Activated B cell treated with CpG ODN at 0.5 μM for 24 hours (primary cell): ENCODE measurements at regions of chr1 and their contacts with region 1.

Region 1: GRCh38 chr1:75233302-75233929 is 99.2 kb downstream of the LHX8 start:
- DNase-seq: no peak
- ATAC-seq: peak; percentile 61
- H3K4me3 Mint-ChIP-seq: no peak overlapping the region
- H3K27ac Mint-ChIP-seq: no peak overlapping the region
- H3K4me1 Mint-ChIP-seq: no peaks in the 10 kb centered on the region
- H3K27me3 Mint-ChIP-seq: no peaks in the 10 kb centered on the region
- CTCF ChIP-seq: peak; percentile 50

Region 2: GRCh38 chr1:75188892-75189291 is 44.5 kb before region 1 on chr1:
- CTCF ChIA-PET with region 1: no interaction called
- POLR2A ChIA-PET with region 1: no interaction called
- intact Hi-C with region 1: no loop called
- DNase-seq: no peak
- ATAC-seq: no peak
- H3K4me3 Mint-ChIP-seq: no peak overlapping the region
- H3K27ac Mint-ChIP-seq: no peak overlapping the region
- H3K4me1 Mint-ChIP-seq: no peaks in the 10 kb centered on the region
- H3K27me3 Mint-ChIP-seq: peaks cover 6% of the 10 kb centered on the region
- CTCF ChIP-seq: no peak

Region 3: GRCh38 chr1:75245239-75245638 is 11.8 kb after region 1 on chr1:
- CTCF ChIA-PET with region 1: interaction called, 14 read pairs
- POLR2A ChIA-PET with region 1: no interaction called
- intact Hi-C with region 1: no loop called
- DNase-seq: no peak
- ATAC-seq: no peak
- H3K4me3 Mint-ChIP-seq: no peak overlapping the region
- H3K27ac Mint-ChIP-seq: no peak overlapping the region
- H3K4me1 Mint-ChIP-seq: peaks cover 5% of the 10 kb centered on the region
- H3K27me3 Mint-ChIP-seq: no peaks in the 10 kb centered on the region
- CTCF ChIP-seq: no peak

Region 4: GRCh38 chr1:75310067-75310466 is 76.7 kb after region 1 on chr1:
- CTCF ChIA-PET with region 1: no interaction called
- POLR2A ChIA-PET with region 1: no interaction called
- intact Hi-C with region 1: no loop called
- DNase-seq: no peak
- ATAC-seq: no peak
- H3K4me3 Mint-ChIP-seq: no peak overlapping the region
- H3K27ac Mint-ChIP-seq: no peak overlapping the region
- H3K4me1 Mint-ChIP-seq: no peaks in the 10 kb centered on the region
- H3K27me3 Mint-ChIP-seq: peaks cover 2% of the 10 kb centered on the region
- CTCF ChIP-seq: no peak

Region 5: GRCh38 chr1:75632350-75632949 is 399.0 kb after region 1 on chr1:
- CTCF ChIA-PET with region 1: interaction called, 7 read pairs
- POLR2A ChIA-PET with region 1: no interaction called
- intact Hi-C with region 1: loop called (anchors 1 kb)
- DNase-seq: no peak
- ATAC-seq: no peak
- H3K4me3 Mint-ChIP-seq: no peak overlapping the region
- H3K27ac Mint-ChIP-seq: no peak overlapping the region
- H3K4me1 Mint-ChIP-seq: no peaks in the 10 kb centered on the region
- H3K27me3 Mint-ChIP-seq: peaks cover 9% of the 10 kb centered on the region
- CTCF ChIP-seq: no peak